ENCODE measurements at regions of chr9 and their contacts with region 1.

Region 1: GRCh38 chr9:132079391-132080091 is at the start of gene MED27:
- DNase-seq: peak; percentile 88
- ATAC-seq: peak; percentile 99
- H3K4me3 Mint-ChIP-seq: peak within 1 kb of the TSS; percentile 93
- H3K27ac Mint-ChIP-seq: peak within 1 kb of the TSS; percentile 81
- H3K4me1 Mint-ChIP-seq: peaks cover 30% of the 10 kb centered on the region
- H3K27me3 Mint-ChIP-seq: peaks cover 7% of the 10 kb centered on the region
- CTCF ChIP-seq: no peak
- total RNA-seq, gene MED27: 18.8 and 24.5 TPM in 2 replicates

Region 2: DNA sequence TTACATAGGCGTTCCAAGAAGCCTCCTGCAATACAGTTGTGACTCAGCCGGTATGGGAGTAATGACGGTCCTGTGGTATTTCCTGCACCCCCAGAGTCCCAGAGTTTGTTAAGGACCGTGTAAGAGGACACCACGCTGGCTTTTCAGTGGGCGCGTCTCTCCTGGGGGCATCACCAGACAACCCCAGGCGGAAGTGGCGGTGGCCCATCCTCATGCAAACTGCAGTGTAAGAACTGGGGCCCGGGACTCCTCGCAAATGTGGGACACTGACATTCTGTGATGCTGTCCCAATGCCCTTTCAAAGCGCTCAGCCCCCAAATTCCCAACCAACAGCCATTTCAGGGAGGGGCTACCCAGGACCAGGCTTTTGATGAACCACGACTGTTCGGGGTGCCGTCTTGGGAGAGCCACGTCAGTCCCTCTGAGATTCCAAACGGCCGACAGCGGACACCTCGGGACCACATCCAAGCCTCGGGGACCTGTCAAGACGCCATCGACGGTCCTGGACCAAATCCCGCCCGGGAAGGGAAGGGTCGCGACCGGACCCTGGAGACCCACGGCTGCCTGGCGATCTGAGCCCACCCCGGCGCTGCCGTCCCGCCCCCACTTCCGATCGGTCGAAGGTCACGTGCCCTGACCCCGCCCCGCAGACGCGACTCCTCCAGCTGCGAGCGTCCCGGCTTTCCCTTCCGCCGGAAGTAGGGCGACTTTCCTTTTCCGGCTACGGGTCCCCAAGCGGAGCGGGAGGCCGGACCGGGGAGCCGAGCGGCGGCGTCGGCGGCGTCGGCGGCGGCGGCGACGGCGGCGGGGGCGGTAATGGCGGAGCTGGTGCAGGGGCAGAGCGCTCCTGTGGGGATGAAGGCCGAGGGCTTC is 1500.4 kb before region 1 on chr9 and contains the start of gene FUBP3:
- CTCF ChIA-PET with region 1: no interaction called
- POLR2A ChIA-PET with region 1: no interaction called
- intact Hi-C with region 1: loop called (anchors 5 kb)
- DNase-seq: peak; percentile 86
- ATAC-seq: peak; percentile 85
- H3K4me3 Mint-ChIP-seq: peak within 1 kb of the TSS; percentile 91
- H3K27ac Mint-ChIP-seq: peak within 1 kb of the TSS; percentile 79
- H3K4me1 Mint-ChIP-seq: peaks cover 37% of the 10 kb centered on the region
- H3K27me3 Mint-ChIP-seq: no peaks in the 10 kb centered on the region
- CTCF ChIP-seq: no peak
- total RNA-seq, gene FUBP3: 38.6 and 44.7 TPM in 2 replicates

Region 3: GRCh38 chr9:132160802-132161742 is 81.5 kb after region 1 on chr9:
- CTCF ChIA-PET with region 1: no interaction called
- POLR2A ChIA-PET with region 1: interaction called, 5 read pairs
- intact Hi-C with region 1: loop called (anchors 2 kb)
- DNase-seq: peak; percentile 41
- ATAC-seq: peak; percentile 74
- H3K4me3 Mint-ChIP-seq: peak overlapping the region; percentile 93
- H3K27ac Mint-ChIP-seq: peak overlapping the region; percentile 67
- H3K4me1 Mint-ChIP-seq: peaks cover 9% of the 10 kb centered on the region
- H3K27me3 Mint-ChIP-seq: peaks cover 46% of the 10 kb centered on the region
- CTCF ChIP-seq: no peak